ENCODE measurements at regions of chr18 and their contacts with region 1.

Region 1: DNA sequence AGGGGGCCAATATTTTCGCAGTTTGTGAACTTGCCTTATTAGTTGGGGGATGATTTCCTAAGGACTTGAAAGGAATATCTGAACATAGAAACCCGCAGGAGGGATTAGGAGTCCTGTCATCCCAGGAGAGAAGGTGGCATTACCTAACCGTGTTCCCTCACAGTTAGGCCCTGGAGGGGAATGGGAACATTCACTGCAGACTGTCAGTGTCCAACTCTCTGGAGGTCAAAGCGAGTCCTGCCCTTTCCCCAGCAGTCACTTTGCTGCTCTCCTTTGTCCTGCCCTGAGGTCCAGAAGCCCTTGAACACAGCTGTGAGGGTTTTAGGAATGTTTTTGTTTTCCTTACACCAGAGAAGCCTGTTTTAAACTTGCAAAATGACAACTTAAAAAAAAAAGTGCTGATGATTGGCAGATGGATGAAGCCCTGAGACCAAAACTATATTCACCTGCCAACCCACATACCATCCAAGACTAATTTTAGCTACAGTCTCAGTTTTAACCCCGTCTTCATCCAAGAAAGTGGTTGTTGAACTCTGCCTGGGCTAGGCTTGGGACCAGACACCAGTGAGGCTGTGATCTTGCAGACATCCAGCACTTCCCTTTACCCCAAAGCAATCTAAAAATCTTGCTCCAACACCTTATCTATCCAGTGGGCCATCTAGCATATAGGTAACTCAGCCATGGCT is 90.5 kb upstream of the MEX3C start:
- DNase-seq: no peak
- ATAC-seq: peak in 7 of 8 donors; percentile 33 to 90 (median 62)
- H3K4me3 ChIP-seq: no peak overlapping the region
- H3K27ac ChIP-seq: peak overlapping the region in 3 of 10 donors; percentile 28 to 56 (median 40)
- H3K4me1 ChIP-seq: peaks cover 0 to 15% (median 0%) of the 10 kb centered on the region in 9 donors
- H3K27me3 ChIP-seq: no peaks in the 10 kb centered on the region
- CTCF ChIP-seq: no peak

Region 2: DNA sequence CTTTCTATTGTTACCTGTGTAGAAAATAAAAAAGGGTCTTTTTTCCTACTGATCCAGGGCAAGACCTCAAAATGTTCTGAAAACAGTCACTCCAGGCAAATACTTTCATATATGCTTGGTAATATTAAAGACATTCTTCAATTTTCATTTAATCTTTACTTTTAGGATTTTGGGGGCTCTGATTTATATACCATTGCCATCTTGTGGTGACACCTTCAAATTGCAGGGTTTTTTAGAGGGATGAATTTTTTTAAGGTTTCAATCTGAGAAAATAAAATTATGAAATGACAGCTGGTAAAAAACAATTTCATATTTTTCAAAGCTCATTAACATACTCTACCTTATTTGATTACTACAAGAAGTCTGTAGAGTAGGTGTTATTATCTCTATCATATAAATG is 701.3 kb before region 1 on chr18:
- intact Hi-C with region 1: no loop called
- DNase-seq: no peak
- ATAC-seq: no peak
- H3K4me3 ChIP-seq: no peak overlapping the region
- H3K27ac ChIP-seq: no peak overlapping the region
- H3K4me1 ChIP-seq: peaks cover 0 to 13% (median 0%) of the 10 kb centered on the region in 9 donors
- H3K27me3 ChIP-seq: no peaks in the 10 kb centered on the region
- CTCF ChIP-seq: peak in 2 of 9 donors; percentile 6 to 19

Region 3: GRCh38 chr18:51383116-51383515 is 95.2 kb after region 1 on chr18:
- intact Hi-C with region 1: loop called in 1 of 10 experiments (anchors 10 kb)
- DNase-seq: no peak
- ATAC-seq: no peak
- H3K4me3 ChIP-seq: no peak overlapping the region
- H3K27ac ChIP-seq: no peak overlapping the region
- H3K4me1 ChIP-seq: no peaks in the 10 kb centered on the region
- H3K27me3 ChIP-seq: no peaks in the 10 kb centered on the region
- CTCF ChIP-seq: no peak

Measured in heart right ventricle (tissue), 16 donors.